Activated CD4-positive, alpha-beta T cell treated with anti-CD3 and anti-CD28 coated beads, Interleukin-2, amount 10 ng/mL, durations not matched to agents 24 days and 14 days (primary cell): ENCODE measurements at regions of chr13 and their contacts with region 1.

Region 1: DNA sequence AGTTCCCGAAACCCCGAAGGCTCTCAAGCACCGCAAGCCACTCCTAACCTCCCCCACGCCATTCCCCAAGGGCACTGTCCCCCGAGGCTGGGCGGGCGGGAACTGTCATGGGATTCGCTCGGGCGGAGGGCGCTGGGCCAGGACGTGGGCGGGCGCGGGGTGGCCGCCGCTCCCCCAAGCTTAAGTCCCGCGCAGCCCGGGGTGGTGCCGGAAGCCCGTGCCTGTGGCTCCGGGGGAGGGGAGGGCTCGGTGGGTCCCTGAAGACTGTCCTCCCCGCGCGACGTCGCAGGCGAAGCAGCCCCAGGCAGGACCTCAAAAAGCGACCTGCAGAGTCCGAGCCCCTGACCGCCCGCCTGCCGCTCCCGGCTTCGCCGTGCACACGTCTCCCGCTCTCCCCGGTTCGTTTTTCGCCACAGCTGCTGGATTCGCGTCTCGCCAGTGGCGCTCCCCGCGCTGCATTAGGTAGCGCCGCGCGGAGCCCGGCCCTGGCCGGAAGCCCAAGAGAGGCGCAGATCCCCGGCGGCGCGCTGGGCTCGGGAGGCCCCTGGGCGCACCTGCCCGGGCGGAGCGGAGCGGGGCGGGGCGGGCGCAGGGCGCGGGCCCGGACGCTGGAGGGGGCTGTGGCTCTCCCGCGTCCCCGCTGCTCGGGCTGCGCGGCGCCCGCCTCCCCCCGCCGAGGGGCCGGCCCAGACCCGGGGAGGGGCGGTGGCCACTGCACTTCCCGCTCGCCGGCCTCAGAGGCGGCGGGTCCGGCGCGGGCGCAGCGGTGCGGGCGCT is at the start of gene FARP1:
- DNase-seq: peak; percentile 85
- H3K4me3 Mint-ChIP-seq: peak within 1 kb of the TSS; percentile 77
- H3K27ac Mint-ChIP-seq: no peak within 1 kb of the TSS
- H3K4me1 Mint-ChIP-seq: peaks cover 5% of the 10 kb centered on the region
- H3K27me3 Mint-ChIP-seq: peaks cover 64% of the 10 kb centered on the region
- total RNA-seq, gene FARP1: 0.28 and 0.37 TPM in 2 replicates

Region 2: GRCh38 chr13:98083507-98083906 is 59.1 kb before region 1 on chr13:
- intact Hi-C with region 1: no loop called
- DNase-seq: no peak
- H3K4me3 Mint-ChIP-seq: no peak overlapping the region
- H3K27ac Mint-ChIP-seq: no peak overlapping the region
- H3K4me1 Mint-ChIP-seq: no peaks in the 10 kb centered on the region
- H3K27me3 Mint-ChIP-seq: no peaks in the 10 kb centered on the region

Region 3: DNA sequence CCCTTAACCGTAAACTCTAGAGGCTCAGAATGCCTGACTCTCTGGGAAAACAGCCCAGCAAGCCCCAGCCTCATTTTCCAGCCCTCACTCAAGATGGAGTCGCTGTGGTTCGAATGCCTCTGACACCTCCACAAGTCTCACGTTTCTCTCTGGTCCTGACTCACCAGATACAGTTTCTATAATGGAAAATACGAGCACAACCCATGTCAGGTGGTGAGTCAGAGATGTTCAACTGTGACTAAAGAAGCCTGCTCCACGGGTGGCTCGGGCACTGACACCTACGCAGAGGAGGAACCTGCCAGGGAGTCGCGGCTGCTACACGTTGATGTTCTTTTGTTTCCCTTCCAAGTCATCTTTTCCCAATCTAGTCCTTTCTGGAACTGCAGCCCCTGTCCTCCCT is 521.5 kb after region 1 on chr13:
- intact Hi-C with region 1: loop called (anchors 10 kb)
- DNase-seq: peak; percentile 73
- H3K4me3 Mint-ChIP-seq: peak overlapping the region; percentile 5
- H3K27ac Mint-ChIP-seq: peak overlapping the region; percentile 82
- H3K4me1 Mint-ChIP-seq: peaks cover 14% of the 10 kb centered on the region
- H3K27me3 Mint-ChIP-seq: peaks cover 18% of the 10 kb centered on the region